ENCODE measurements at regions of chr4 and their contacts with region 1.

Region 1: GRCh38 chr4:145565328-145565727 is 53.9 kb upstream of the MMAA start:
- DNase-seq: no peak
- H3K4me3 ChIP-seq: no peak overlapping the region
- H3K27ac ChIP-seq: no peak overlapping the region
- H3K4me1 ChIP-seq: no peaks in the 10 kb centered on the region
- H3K27me3 ChIP-seq: no peaks in the 10 kb centered on the region
- CTCF ChIP-seq: no peak

Region 2: GRCh38 chr4:145182222-145182621 is 383.1 kb before region 1 on chr4:
- CTCF ChIA-PET with region 1: no interaction called
- POLR2A ChIA-PET with region 1: interaction called, 16 read pairs
- intact Hi-C with region 1: no loop called
- DNase-seq: no peak
- H3K4me3 ChIP-seq: no peak overlapping the region
- H3K27ac ChIP-seq: no peak overlapping the region
- H3K4me1 ChIP-seq: peaks cover 5% of the 10 kb centered on the region
- H3K27me3 ChIP-seq: no peaks in the 10 kb centered on the region
- CTCF ChIP-seq: no peak

Measured in A673 (cell line).